ENCODE measurements at regions of chr9 and their contacts with region 1.

Region 1: GRCh38 chr9:92133949-92134604 is 18.9 kb upstream of the SPTLC1 start:
- DNase-seq: peak; percentile 90
- H3K4me3 ChIP-seq: peak overlapping the region in 1 of 2 experiments; percentile 8; a peak in 2 of 4 replicates
- H3K27ac ChIP-seq: 0 out of 4 replicates have a peak overlapping the region, but pooled peaks of 1 of the 2 experiments have one; percentile 28
- H3K4me1 ChIP-seq: peaks cover 0 to 13% of the 10 kb centered on the region in 2 experiments; a peak in 1 of 4 replicates
- H3K27me3 ChIP-seq: no peaks in the 10 kb centered on the region
- CTCF ChIP-seq: peak; percentile 85
- EP300 ChIP-seq: no peak
- RAD21 ChIP-seq: peak; percentile 76

Region 2: DNA sequence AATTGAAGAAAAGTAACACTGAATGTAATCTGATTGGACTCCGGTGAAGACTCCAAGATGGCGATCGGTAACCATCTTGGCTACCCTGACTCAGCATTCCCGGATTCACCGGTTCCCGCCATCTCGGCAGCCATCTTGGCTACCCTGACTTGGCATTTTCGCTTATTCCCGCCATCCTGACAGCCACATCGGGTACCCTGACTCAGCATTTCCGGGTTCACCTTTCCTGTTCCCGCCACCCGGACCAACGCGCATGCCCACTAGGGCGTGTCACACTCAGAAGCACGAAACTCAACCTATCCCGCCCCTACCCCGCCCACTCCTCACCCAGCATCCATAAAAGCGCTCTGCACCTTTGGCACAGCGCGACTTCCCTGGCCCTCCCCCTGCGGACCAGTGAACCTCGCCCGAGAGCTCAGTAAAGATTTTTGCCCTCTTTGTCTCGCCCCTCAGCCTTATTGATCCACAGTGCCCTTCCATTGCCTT is 36.0 kb before region 1 on chr9:
- CTCF ChIA-PET with region 1: no interaction called
- POLR2A ChIA-PET with region 1: no interaction called
- DNase-seq: no peak
- H3K4me3 ChIP-seq: no peak overlapping the region
- H3K27ac ChIP-seq: no peak overlapping the region
- H3K4me1 ChIP-seq: peaks cover 0 to 6% of the 10 kb centered on the region in 2 experiments; a peak in 1 of 4 replicates
- H3K27me3 ChIP-seq: no peaks in the 10 kb centered on the region
- CTCF ChIP-seq: no peak
- EP300 ChIP-seq: no peak
- RAD21 ChIP-seq: no peak

Region 3: DNA sequence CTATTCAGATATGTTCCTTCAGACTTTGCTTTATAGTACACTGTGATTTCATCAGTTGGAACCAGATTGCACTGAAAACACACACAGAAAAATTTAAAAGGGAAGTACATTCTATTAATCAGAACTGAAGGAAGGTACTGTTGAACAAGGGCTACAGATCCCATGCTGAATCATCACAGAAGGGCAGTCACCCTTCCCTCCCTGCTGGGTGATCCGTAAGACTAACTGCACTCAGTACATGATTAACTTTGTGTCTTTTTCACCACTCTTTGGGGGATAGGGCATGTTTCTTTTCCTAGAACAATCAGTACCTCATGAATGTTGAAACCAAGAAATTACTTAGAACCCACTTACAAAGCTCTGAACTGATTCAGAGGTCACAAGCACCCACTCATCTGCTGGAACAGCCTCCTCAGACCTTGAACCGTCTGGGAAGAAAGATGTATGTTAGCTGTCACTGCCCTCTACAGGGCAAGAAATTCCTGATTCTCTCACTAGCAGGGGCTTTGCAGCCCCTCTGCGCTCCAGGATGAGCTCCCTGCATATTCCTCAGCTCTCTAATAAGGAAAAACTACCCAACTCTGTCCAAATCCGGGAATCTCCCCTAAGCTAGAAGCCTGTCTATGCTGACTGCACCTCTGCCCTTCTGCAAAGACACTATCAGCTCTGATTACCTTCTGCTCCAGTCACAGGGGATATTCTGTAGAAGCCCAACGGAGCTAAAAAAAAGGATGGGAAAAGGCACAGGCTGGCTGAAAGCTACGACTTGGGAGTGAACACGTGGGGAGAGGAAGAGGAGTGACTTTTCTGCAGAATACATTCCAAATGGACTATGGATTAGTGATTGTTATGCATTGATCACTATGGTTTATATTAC is 108.4 kb after region 1 on chr9:
- CTCF ChIA-PET with region 1: interaction called, 94 read pairs
- POLR2A ChIA-PET with region 1: no interaction called
- DNase-seq: peak; percentile 44
- H3K4me3 ChIP-seq: no peak overlapping the region
- H3K27ac ChIP-seq: no peak overlapping the region
- H3K4me1 ChIP-seq: peaks cover 0 to 7% of the 10 kb centered on the region in 2 experiments; a peak in 1 of 4 replicates
- H3K27me3 ChIP-seq: no peaks in the 10 kb centered on the region
- CTCF ChIP-seq: peak; percentile 54
- EP300 ChIP-seq: no peak
- RAD21 ChIP-seq: peak; percentile 59